Adrenal gland (tissue), 19 donors: ENCODE measurements at regions of chr15 and their contacts with region 1.

Region 1: DNA sequence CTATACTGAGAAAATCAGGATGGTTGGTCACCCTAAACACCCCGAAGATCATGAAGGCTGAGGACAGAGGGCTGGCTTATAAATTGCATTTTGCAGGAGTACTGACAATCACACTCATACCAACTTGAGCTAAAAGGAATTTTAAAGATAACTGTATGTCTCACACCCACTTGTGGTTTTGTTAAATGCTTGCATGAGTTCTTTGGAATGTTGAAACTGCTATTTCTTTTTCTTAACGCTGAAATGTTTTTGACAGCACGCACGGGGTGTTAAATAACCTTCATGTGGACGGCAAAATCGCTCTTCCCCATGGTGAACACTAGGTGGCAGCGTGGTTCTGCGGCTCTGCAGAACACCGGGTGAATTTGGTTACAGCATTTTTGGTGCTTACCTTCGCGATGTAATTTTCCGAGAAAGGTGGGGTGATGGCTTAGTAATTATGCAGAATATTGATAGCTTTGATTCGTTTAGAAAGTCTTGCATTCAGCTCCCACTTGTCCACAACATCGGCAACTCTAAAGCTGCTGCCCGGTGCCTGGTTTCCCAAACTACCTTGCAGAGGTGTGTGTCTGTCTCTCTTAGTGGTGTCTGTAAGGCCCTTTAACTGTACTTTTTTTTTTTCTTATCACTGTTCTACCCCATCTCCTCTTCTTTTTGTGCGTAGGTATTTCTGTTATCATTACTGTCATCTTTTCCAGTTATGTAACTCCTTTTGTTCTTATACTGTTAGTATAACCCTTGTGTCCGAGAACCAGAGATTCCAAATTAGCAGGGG is 51.7 kb downstream of the ARNT2 start:
- DNase-seq: peak; percentile 37 to 69 (median 59)
- H3K4me3 ChIP-seq: no peak overlapping the region
- H3K27ac ChIP-seq: no peak overlapping the region
- H3K4me1 ChIP-seq: peaks cover 0 to 4% of the 10 kb centered on the region in 2 donors
- H3K27me3 ChIP-seq: no peaks in the 10 kb centered on the region
- CTCF ChIP-seq: peak; percentile 86 to 94 (median 92)
- POLR2A ChIP-seq: no peak

Region 2: DNA sequence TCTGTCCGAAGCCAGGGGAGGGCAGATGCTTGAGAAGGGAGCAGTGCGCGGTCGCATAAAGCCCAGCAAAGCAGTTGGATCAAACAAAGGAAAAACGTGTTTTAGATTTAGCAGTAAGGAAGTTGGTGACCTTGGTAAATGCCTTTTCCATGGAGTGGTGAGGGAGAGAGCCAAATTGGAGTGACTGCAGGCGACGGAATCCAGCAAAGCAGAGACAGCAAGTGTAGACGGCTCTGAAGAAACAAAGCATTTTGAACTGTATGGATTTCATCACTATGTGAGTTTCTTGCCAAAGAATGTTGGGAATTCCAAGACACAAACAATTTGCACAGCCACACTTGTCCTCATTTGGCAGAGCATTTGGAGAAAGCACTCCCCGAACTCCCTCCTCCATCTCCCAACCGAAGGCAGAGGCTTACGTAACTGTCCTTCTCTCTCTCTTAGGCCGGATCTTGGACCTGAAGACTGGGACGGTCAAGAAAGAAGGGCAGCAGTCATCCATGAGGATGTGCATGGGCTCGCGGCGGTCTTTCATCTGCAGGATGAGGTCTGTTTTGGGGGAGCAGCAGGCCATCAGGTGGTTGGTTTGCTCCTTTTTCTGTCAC is 52.0 kb after region 1 on chr15:
- intact Hi-C with region 1: loop called (anchors 5 to 10 kb)
- DNase-seq: no peak
- H3K4me3 ChIP-seq: no peak overlapping the region
- H3K27ac ChIP-seq: no peak overlapping the region
- H3K4me1 ChIP-seq: no peaks in the 10 kb centered on the region
- H3K27me3 ChIP-seq: no peaks in the 10 kb centered on the region
- CTCF ChIP-seq: no peak
- POLR2A ChIP-seq: no peak

Region 3: GRCh38 chr15:80512726-80513660 is 57.1 kb after region 1 on chr15:
- intact Hi-C with region 1: loop called (anchors 5 to 10 kb)
- DNase-seq: peak in 5 of 7 donors; percentile 35 to 61 (median 39)
- H3K4me3 ChIP-seq: no peak overlapping the region
- H3K27ac ChIP-seq: no peak overlapping the region
- H3K4me1 ChIP-seq: no peaks in the 10 kb centered on the region
- H3K27me3 ChIP-seq: no peaks in the 10 kb centered on the region
- CTCF ChIP-seq: peak in 5 of 6 experiments; percentile 22 to 41 (median 30)
- POLR2A ChIP-seq: no peak

Region 4: GRCh38 chr15:80567721-80568157 is 111.9 kb after region 1 on chr15:
- intact Hi-C with region 1: loop called (anchors 5 to 10 kb)
- DNase-seq: peak; percentile 54 to 83 (median 65)
- H3K4me3 ChIP-seq: no peak overlapping the region
- H3K27ac ChIP-seq: no peak overlapping the region
- H3K4me1 ChIP-seq: no peaks in the 10 kb centered on the region
- H3K27me3 ChIP-seq: no peaks in the 10 kb centered on the region
- CTCF ChIP-seq: peak; percentile 55 to 81 (median 74)
- POLR2A ChIP-seq: no peak

Region 5: GRCh38 chr15:80776420-80777045 is 320.7 kb after region 1 on chr15:
- intact Hi-C with region 1: loop called (anchors 5 to 10 kb)
- DNase-seq: peak; percentile 73 to 90 (median 77)
- H3K4me3 ChIP-seq: no peak overlapping the region
- H3K27ac ChIP-seq: no peak overlapping the region
- H3K4me1 ChIP-seq: peaks cover 5 to 20% of the 10 kb centered on the region in 2 donors
- H3K27me3 ChIP-seq: peaks cover 21% of the 10 kb centered on the region
- CTCF ChIP-seq: peak; percentile 74 to 85 (median 80)
- POLR2A ChIP-seq: no peak

Region 6: GRCh38 chr15:80970018-80970658 is 514.3 kb after region 1 on chr15:
- intact Hi-C with region 1: loop called in 1 of 2 experiments (anchors 5 kb)
- DNase-seq: peak; percentile 34 to 81 (median 60)
- H3K4me3 ChIP-seq: no peak overlapping the region
- H3K27ac ChIP-seq: no peak overlapping the region
- H3K4me1 ChIP-seq: no peaks in the 10 kb centered on the region
- H3K27me3 ChIP-seq: no peaks in the 10 kb centered on the region
- CTCF ChIP-seq: peak; percentile 72 to 97 (median 80)
- POLR2A ChIP-seq: no peak